Calu3 (cell line): ENCODE measurements at regions of chr5 and their contacts with region 1.

Region 1: GRCh38 chr5:157130925-157131324 is 11.7 kb downstream of the MED7 start:
- DNase-seq: peak; percentile 19
- H3K4me3 Mint-ChIP-seq: no peak overlapping the region
- H3K27ac Mint-ChIP-seq: no peak overlapping the region
- H3K4me1 Mint-ChIP-seq: peaks cover 9% of the 10 kb centered on the region
- H3K27me3 Mint-ChIP-seq: no peaks in the 10 kb centered on the region
- CTCF ChIP-seq: no peak

Region 2: GRCh38 chr5:156675395-156675794 is 455.5 kb before region 1 on chr5:
- CTCF ChIA-PET with region 1: no interaction called
- intact Hi-C with region 1: loop called (anchors 5 kb)
- DNase-seq: no peak
- H3K4me3 Mint-ChIP-seq: no peak overlapping the region
- H3K27ac Mint-ChIP-seq: no peak overlapping the region
- H3K4me1 Mint-ChIP-seq: peaks cover 17% of the 10 kb centered on the region
- H3K27me3 Mint-ChIP-seq: no peaks in the 10 kb centered on the region
- CTCF ChIP-seq: no peak

Region 3: DNA sequence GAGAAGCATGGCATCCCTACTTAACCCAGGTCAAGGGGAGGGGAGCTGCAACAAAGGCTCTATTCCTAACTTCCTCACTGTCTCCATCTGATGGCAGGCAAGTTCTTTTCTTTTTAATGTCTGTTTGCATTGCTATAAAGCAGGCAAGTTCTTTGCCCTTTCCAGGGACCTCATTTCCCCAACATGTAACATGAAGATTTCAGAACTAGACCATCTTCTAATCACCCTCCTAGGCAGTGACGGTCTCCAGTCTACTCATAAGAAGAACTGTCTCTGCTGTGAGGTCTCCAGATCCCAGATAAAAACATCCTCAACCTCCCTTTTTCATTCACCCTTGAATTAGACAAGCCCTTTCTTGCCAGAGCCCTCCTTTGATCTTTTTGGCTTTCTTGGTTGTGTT is 238.7 kb before region 1 on chr5:
- CTCF ChIA-PET with region 1: interaction called, 4 read pairs
- intact Hi-C with region 1: loop called (anchors 1 kb)
- DNase-seq: no peak
- H3K4me3 Mint-ChIP-seq: no peak overlapping the region
- H3K27ac Mint-ChIP-seq: no peak overlapping the region
- H3K4me1 Mint-ChIP-seq: no peaks in the 10 kb centered on the region
- H3K27me3 Mint-ChIP-seq: no peaks in the 10 kb centered on the region
- CTCF ChIP-seq: no peak

Region 4: GRCh38 chr5:157026789-157027424 is 104.0 kb before region 1 on chr5:
- CTCF ChIA-PET with region 1: interaction called, 7 read pairs
- intact Hi-C with region 1: loop called (anchors 1 kb)
- DNase-seq: peak; percentile 64
- H3K4me3 Mint-ChIP-seq: no peak overlapping the region
- H3K27ac Mint-ChIP-seq: no peak overlapping the region
- H3K4me1 Mint-ChIP-seq: peaks cover 31% of the 10 kb centered on the region
- H3K27me3 Mint-ChIP-seq: no peaks in the 10 kb centered on the region
- CTCF ChIP-seq: peak; percentile 60

Region 5: GRCh38 chr5:157046041-157046440 is 84.9 kb before region 1 on chr5:
- CTCF ChIA-PET with region 1: interaction called, 4 read pairs
- intact Hi-C with region 1: loop called (anchors 5 kb)
- DNase-seq: peak; percentile 85
- H3K4me3 Mint-ChIP-seq: peak overlapping the region; percentile 44
- H3K27ac Mint-ChIP-seq: peak overlapping the region; percentile 98
- H3K4me1 Mint-ChIP-seq: peaks cover 62% of the 10 kb centered on the region
- H3K27me3 Mint-ChIP-seq: no peaks in the 10 kb centered on the region
- CTCF ChIP-seq: no peak

Region 6: GRCh38 chr5:157072508-157072907 is 58.4 kb before region 1 on chr5:
- CTCF ChIA-PET with region 1: interaction called, 7 read pairs
- intact Hi-C with region 1: loop called (anchors 5 kb)
- DNase-seq: peak; percentile 83
- H3K4me3 Mint-ChIP-seq: peak overlapping the region; percentile 31
- H3K27ac Mint-ChIP-seq: peak overlapping the region; percentile 91
- H3K4me1 Mint-ChIP-seq: peaks cover 46% of the 10 kb centered on the region
- H3K27me3 Mint-ChIP-seq: no peaks in the 10 kb centered on the region
- CTCF ChIP-seq: no peak